ENCODE measurements at regions of chr2 and their contacts with region 1.

Region 1: GRCh38 chr2:42360890-42361727 is at the start of gene COX7A2L:
- DNase-seq: peak; percentile 91
- H3K4me3 Mint-ChIP-seq: peak within 1 kb of the TSS; percentile 84
- H3K27ac Mint-ChIP-seq: peak within 1 kb of the TSS; percentile 96
- H3K4me1 Mint-ChIP-seq: peaks cover 35% of the 10 kb centered on the region
- H3K27me3 Mint-ChIP-seq: peaks cover 2% of the 10 kb centered on the region
- total RNA-seq, gene COX7A2L: 73.4 and 79.8 TPM in 2 replicates

Region 2: DNA sequence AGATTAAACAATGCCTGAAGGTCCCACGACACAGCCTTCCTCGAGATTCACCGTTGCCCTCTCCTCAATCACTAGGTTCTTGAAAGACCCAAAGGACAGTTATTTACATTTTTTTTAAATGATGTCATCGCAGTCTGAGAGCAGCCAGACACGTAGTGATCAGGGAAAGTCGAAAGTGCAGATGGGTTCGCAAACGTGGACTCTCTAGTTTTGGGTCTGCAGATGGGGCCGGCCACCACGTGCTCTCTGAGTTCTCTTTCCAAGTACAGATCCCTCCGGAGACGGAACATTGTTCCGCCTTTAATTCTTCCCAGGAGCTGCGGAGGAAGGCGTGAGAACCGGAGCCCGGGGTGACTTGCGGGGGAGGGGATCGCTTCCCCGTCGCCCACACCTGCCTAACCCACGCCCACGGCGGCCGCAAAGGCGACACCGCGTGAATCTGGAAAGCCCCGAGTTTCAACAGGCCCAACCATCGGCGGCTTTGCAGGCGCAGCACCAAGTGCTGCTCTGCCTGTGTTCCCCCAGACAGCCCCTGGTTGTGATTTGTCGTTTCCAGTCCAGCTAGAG is 259.0 kb before region 1 on chr2:
- intact Hi-C with region 1: loop called (anchors 1 kb)
- DNase-seq: peak; percentile 84
- H3K4me3 Mint-ChIP-seq: peak overlapping the region; percentile 67
- H3K27ac Mint-ChIP-seq: peak overlapping the region; percentile 92
- H3K4me1 Mint-ChIP-seq: peaks cover 60% of the 10 kb centered on the region
- H3K27me3 Mint-ChIP-seq: no peaks in the 10 kb centered on the region

Region 3: DNA sequence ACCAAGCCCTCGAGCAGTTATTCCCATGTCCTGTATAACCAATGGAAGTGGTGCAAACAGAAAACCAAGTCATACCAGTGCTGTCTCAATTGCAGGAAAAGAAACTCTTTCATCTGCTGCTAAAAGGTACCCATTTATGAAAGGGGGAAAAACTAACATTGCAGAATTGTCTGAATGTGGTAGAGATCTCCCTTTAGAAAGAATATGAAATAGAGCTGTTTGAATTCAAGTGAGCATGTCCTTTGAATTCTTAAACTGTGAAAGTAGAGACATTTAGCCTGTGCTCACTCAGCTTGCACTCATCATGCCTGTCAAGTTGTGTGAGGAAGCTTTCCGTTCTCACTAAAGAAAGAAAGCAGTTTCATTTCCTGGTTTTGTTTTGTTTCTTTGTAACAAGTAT is 104.6 kb before region 1 on chr2:
- intact Hi-C with region 1: loop called (anchors 1 kb)
- DNase-seq: no peak
- H3K4me3 Mint-ChIP-seq: peak overlapping the region; percentile 33
- H3K27ac Mint-ChIP-seq: peak overlapping the region; percentile 61
- H3K4me1 Mint-ChIP-seq: peaks cover 37% of the 10 kb centered on the region
- H3K27me3 Mint-ChIP-seq: no peaks in the 10 kb centered on the region

Region 4: DNA sequence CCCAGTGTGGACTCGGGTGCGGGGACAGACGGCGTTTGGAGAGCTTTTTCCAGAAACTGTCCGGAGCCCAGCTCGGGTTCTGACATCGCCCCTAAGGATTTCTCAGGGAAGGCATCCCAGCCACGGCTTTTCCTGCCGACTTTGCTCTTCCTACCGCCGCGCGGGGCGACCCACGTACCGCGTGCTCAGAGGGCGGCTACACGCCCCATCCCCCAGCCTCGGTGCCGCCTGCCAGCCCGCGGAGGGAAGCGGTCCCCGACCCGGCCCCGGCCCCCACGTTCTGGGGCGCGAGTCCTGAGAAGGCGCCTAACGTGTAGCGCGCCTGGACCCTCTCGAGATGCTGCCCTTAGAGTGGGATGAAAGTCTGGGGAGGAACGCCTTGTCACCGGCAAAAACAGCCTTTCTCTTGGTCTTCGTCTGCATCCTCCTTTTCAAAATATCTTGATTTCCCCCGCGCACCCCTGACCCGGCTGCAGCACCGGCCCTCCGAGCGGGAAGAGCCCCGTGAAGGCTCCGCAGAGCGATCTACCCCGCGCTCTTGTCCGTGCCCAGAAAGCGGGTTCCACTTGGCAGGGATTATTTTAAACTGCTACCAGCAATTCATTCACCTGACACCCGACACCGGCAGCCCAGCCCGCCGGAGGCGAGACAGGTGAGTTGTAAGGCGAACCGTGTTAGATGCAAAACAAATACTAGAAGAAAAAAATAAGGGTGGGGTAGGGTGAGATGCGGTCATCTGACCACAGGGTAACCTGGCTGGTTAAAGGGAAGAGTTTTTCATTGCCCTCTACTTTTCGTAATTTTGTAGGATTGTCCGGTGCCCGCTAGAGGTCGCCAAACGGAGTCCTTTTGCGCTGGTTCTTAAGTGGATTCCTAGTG is 133.5 kb after region 1 on chr2:
- intact Hi-C with region 1: loop called (anchors 1 kb)
- DNase-seq: peak; percentile 70
- H3K4me3 Mint-ChIP-seq: peak overlapping the region; percentile 89
- H3K27ac Mint-ChIP-seq: peak overlapping the region; percentile 72
- H3K4me1 Mint-ChIP-seq: peaks cover 8% of the 10 kb centered on the region
- H3K27me3 Mint-ChIP-seq: peaks cover 34% of the 10 kb centered on the region

Region 5: DNA sequence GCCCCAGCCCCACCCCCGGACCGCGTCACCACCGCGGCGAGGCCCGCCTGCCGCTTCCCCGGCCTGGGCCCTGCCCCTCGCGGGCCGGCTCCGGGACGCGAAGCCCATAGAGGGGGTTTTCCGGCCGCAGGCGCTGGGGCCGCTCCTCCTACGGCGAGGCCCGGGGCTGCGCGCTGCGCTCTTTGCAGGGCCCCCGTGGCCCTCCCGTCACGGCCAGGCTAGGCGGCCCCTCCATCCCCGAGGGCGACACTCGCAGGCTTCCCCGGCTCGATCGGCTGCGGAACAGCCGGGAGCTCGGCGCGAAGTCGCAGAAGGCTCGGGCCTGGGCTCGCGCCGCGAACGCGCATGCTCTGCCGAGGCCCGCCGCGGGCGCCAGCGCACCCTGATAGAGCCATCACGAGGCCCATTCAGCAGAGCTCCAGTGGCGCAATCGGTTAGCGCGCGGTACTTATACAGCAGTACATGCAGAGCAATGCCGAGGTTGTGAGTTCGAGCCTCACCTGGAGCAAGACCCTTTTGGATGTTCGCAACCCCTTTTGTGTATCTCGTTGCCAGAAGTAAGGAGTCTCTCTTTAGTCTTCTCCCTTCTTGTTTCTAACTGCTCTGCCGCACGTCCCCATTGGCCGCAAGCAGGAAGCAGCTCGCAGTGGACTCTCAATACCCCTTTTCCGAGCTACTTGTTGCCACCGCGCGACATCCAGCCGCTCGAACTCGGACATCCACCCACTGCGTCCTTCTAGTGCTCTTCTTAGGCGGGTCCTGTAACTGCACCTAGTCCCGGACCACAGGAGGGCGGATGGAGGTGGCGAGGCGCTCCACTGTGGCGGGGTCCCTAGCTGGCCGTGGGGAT is 449.2 kb after region 1 on chr2:
- intact Hi-C with region 1: loop called (anchors 2 kb)
- DNase-seq: peak; percentile 94
- H3K4me3 Mint-ChIP-seq: peak overlapping the region; percentile 95
- H3K27ac Mint-ChIP-seq: peak overlapping the region; percentile 100
- H3K4me1 Mint-ChIP-seq: peaks cover 21% of the 10 kb centered on the region
- H3K27me3 Mint-ChIP-seq: no peaks in the 10 kb centered on the region

Measured in activated T-helper 2 cell treated with anti-CD3 and anti-CD28 coated beads, Interferon-gamma antibody, Interleukin-2, Interleukin-4, amounts not matched to agents 10 μg/mL and 5 μg/mL and 100 μg/mL, durations not matched to agents 14 hours and 24 hours and 36 hours (primary cell).